K562 (cell line): ENCODE measurements at regions of chr1 and their contacts with region 1.

Region 1: GRCh38 chr1:233394860-233395717 is 67.6 kb downstream of the MAP3K21 start:
- DNase-seq: peak; percentile 47 to 65 (median 52)
- ATAC-seq: peak; percentile 98
- H3K4me3 ChIP-seq: no peak overlapping the region
- H3K27ac ChIP-seq: no peak overlapping the region
- H3K4me1 ChIP-seq: no peaks in the 10 kb centered on the region; a peak in 1 of 5 replicates
- H3K27me3 ChIP-seq: no peaks in the 10 kb centered on the region
- CTCF ChIP-seq: peak; percentile 80 to 91 (median 83)
- EP300 ChIP-seq: no peak
- POLR2A ChIP-seq: no peak
- RAD21 ChIP-seq: peak; percentile 94 to 95

Region 2: GRCh38 chr1:234114648-234115307 is 719.7 kb after region 1 on chr1:
- CTCF ChIA-PET with region 1: no interaction called
- POLR2A ChIA-PET with region 1: no interaction called
- in situ Hi-C with region 1: no loop called
- intact Hi-C with region 1: loop called (anchors 1 kb)
- DNase-seq: peak; percentile 35 to 57 (median 41)
- ATAC-seq: peak; percentile 76
- H3K4me3 ChIP-seq: no peak overlapping the region
- H3K27ac ChIP-seq: no peak overlapping the region
- H3K4me1 ChIP-seq: 0 out of 5 replicates have a peak, but pooled peaks cover 0 to 3% of the 10 kb centered on the region in 2 experiments
- H3K27me3 ChIP-seq: peaks cover 7 to 22% of the 10 kb centered on the region in 2 experiments; a peak in 4 of 5 replicates
- CTCF ChIP-seq: peak; percentile 59 to 86 (median 75)
- EP300 ChIP-seq: no peak
- POLR2A ChIP-seq: no peak
- RAD21 ChIP-seq: peak; percentile 65 to 73